CD8-positive, alpha-beta T cell (primary cell): ENCODE measurements at regions of chr4 and their contacts with region 1.

Region 1: GRCh38 chr4:26878794-26879391 is 18.3 kb downstream of the STIM2 start:
- DNase-seq: peak in 3 of 9 experiments; percentile 30 to 56 (median 56)
- ATAC-seq: peak; percentile 56
- H3K4me3 ChIP-seq: no peak overlapping the region
- H3K4me3 Mint-ChIP-seq: peak overlapping the region; percentile 54
- H3K27ac ChIP-seq: peak overlapping the region in 1 of 2 experiments; percentile 79
- H3K27ac Mint-ChIP-seq: peak overlapping the region; percentile 92
- H3K4me1 ChIP-seq: peaks cover 61% of the 10 kb centered on the region
- H3K4me1 Mint-ChIP-seq: peaks cover 78% of the 10 kb centered on the region
- H3K27me3 ChIP-seq: no peaks in the 10 kb centered on the region
- H3K27me3 Mint-ChIP-seq: no peaks in the 10 kb centered on the region
- CTCF ChIP-seq: no peak

Region 2: DNA sequence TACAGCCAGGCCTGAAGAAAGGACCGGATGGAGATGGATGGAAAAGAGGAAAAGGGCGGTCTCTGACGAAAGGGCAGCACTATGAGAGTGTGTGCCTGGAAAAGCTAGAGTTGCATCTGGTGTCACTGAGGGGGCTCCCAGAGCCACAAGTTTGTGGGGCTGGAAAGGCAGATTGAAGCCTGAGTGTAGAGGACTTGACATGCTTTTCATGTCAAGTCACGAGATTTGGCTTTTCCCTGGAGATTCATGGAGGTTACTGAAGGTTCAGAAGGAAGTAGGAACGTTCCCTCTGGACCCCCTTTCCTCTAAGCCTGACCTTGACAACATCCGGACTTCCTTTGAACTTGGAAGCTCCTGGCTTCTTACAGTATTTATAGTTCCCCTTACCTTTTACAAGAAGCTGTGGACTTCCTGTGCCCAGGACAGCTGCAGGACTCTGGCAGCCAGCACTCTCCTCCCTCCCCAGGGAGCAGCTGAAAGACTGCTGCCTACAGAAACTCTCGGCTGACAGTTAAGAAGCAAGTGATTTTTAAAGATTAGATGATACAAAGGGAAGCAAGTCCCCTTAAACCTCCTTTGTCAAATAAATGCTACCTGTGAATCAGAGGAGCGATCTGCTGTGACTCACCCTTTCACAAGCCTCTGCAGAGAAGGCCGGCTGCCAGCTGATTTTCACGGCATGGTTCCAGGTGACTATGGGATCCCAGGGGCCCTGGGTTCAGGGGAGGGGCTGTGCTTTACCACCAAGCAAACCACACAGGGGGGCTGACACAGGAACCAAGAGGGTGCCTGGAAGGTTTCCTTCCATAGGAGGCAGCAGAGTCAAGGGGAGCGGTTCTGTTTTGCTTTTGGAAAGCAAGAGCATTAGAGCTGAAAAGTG is 91.2 kb before region 1 on chr4:
- CTCF ChIA-PET with region 1: no interaction called
- POLR2A ChIA-PET with region 1: no interaction called
- intact Hi-C with region 1: no loop called
- DNase-seq: peak in 6 of 9 experiments; percentile 29 to 59 (median 41)
- ATAC-seq: peak; percentile 74
- H3K4me3 ChIP-seq: no peak overlapping the region
- H3K4me3 Mint-ChIP-seq: no peak overlapping the region
- H3K27ac ChIP-seq: no peak overlapping the region
- H3K27ac Mint-ChIP-seq: no peak overlapping the region
- H3K4me1 ChIP-seq: peaks cover 10% of the 10 kb centered on the region
- H3K4me1 Mint-ChIP-seq: peaks cover 11% of the 10 kb centered on the region
- H3K27me3 ChIP-seq: no peaks in the 10 kb centered on the region
- H3K27me3 Mint-ChIP-seq: no peaks in the 10 kb centered on the region
- CTCF ChIP-seq: peak; percentile 39

Region 3: GRCh38 chr4:26867914-26868684 is 10.8 kb before region 1 on chr4:
- CTCF ChIA-PET with region 1: no interaction called
- POLR2A ChIA-PET with region 1: interaction called, 9 read pairs
- intact Hi-C with region 1: loop called in 1 of 2 experiments (anchors 1 kb)
- DNase-seq: no peak
- ATAC-seq: no peak
- H3K4me3 ChIP-seq: no peak overlapping the region
- H3K4me3 Mint-ChIP-seq: peak overlapping the region; percentile 55
- H3K27ac ChIP-seq: peak overlapping the region in 1 of 2 experiments; percentile 24
- H3K27ac Mint-ChIP-seq: peak overlapping the region; percentile 50
- H3K4me1 ChIP-seq: peaks cover 87% of the 10 kb centered on the region
- H3K4me1 Mint-ChIP-seq: peaks cover 89% of the 10 kb centered on the region
- H3K27me3 ChIP-seq: no peaks in the 10 kb centered on the region
- H3K27me3 Mint-ChIP-seq: no peaks in the 10 kb centered on the region
- CTCF ChIP-seq: no peak